ENCODE measurements at regions of chr12 and their contacts with region 1.

Region 1: DNA sequence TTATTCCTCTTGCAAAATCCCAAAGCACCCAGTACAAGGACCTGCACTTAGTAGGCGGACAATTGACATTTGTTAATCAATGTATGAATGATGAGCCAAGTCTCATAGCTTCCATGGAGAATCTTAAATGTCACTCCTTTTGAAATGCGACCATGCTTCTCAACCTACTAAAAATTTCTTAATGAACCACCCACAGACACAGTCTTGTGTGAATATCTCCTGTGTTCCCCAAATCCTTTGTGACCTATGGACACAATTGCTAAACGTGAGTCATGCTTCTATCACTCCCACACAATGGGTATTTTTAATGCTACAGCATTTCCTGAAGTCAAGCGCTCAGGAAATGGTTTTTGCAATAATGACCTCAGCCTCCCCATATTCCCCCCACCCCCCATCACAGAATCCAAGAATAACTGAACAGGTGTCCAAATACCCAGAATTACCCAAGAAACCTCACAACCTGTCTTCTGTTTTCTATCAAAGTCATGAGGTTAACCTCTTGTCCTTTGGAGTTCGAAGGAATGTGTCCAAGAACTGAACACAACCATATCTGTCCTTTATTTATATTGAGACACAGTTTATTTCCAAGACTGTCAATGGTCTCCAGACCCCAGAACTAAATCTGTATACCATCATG is 163.6 kb upstream of the PLEKHG7 start:
- DNase-seq: peak; percentile 65
- H3K4me3 Mint-ChIP-seq: no peak overlapping the region
- H3K27ac Mint-ChIP-seq: peak overlapping the region; percentile 97
- H3K4me1 Mint-ChIP-seq: peaks cover 56% of the 10 kb centered on the region
- H3K27me3 Mint-ChIP-seq: no peaks in the 10 kb centered on the region

Region 2: DNA sequence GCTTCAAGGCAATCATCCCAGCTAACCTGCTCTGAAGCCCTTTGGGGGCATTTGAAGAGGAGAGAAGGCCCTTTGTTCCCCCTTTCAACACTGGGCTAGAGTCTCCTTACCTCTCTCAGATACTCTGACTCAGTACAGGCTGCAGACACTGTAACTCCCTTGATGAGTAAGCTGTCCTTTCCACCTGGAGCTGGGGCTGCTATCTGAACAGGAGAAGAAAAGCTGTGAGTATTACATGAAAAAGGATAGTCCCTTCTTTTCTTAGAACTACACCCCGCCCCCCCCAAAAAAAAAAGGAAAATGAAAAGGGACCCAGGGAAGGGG is 23.0 kb before region 1 on chr12:
- CTCF ChIA-PET with region 1: no interaction called
- intact Hi-C with region 1: loop called (anchors 1 kb)
- DNase-seq: peak; percentile 72
- H3K4me3 Mint-ChIP-seq: peak overlapping the region; percentile 61
- H3K27ac Mint-ChIP-seq: peak overlapping the region; percentile 92
- H3K4me1 Mint-ChIP-seq: peaks cover 46% of the 10 kb centered on the region
- H3K27me3 Mint-ChIP-seq: no peaks in the 10 kb centered on the region

Region 3: GRCh38 chr12:92528097-92528496 is 11.1 kb before region 1 on chr12:
- CTCF ChIA-PET with region 1: no interaction called
- intact Hi-C with region 1: no loop called
- DNase-seq: no peak
- H3K4me3 Mint-ChIP-seq: no peak overlapping the region
- H3K27ac Mint-ChIP-seq: no peak overlapping the region
- H3K4me1 Mint-ChIP-seq: peaks cover 19% of the 10 kb centered on the region
- H3K27me3 Mint-ChIP-seq: no peaks in the 10 kb centered on the region

Measured in activated naive CD4-positive, alpha-beta T cell treated with anti-CD3 and anti-CD28 coated beads for 36 hours (primary cell).